ENCODE measurements at regions of chr6 and their contacts with region 1.

Region 1: GRCh38 chr6:108921547-108922361 is 73.5 kb downstream of the ARMC2 start:
- DNase-seq: no peak
- H3K4me3 Mint-ChIP-seq: no peak overlapping the region
- H3K27ac Mint-ChIP-seq: peak overlapping the region; percentile 4
- H3K4me1 Mint-ChIP-seq: peaks cover 37% of the 10 kb centered on the region
- H3K27me3 Mint-ChIP-seq: peaks cover 65% of the 10 kb centered on the region

Region 2: GRCh38 chr6:108874470-108875160 is 47.1 kb before region 1 on chr6:
- intact Hi-C with region 1: loop called (anchors 1 kb)
- DNase-seq: peak; percentile 58
- H3K4me3 Mint-ChIP-seq: peak overlapping the region; percentile 47
- H3K27ac Mint-ChIP-seq: peak overlapping the region; percentile 81
- H3K4me1 Mint-ChIP-seq: peaks cover 53% of the 10 kb centered on the region
- H3K27me3 Mint-ChIP-seq: peaks cover 15% of the 10 kb centered on the region

Region 3: GRCh38 chr6:108942556-108943492 is 21.1 kb after region 1 on chr6:
- intact Hi-C with region 1: loop called (anchors 2 kb)
- DNase-seq: peak; percentile 58
- H3K4me3 Mint-ChIP-seq: peak overlapping the region; percentile 64
- H3K27ac Mint-ChIP-seq: peak overlapping the region; percentile 84
- H3K4me1 Mint-ChIP-seq: peaks cover 59% of the 10 kb centered on the region
- H3K27me3 Mint-ChIP-seq: no peaks in the 10 kb centered on the region

Region 4: DNA sequence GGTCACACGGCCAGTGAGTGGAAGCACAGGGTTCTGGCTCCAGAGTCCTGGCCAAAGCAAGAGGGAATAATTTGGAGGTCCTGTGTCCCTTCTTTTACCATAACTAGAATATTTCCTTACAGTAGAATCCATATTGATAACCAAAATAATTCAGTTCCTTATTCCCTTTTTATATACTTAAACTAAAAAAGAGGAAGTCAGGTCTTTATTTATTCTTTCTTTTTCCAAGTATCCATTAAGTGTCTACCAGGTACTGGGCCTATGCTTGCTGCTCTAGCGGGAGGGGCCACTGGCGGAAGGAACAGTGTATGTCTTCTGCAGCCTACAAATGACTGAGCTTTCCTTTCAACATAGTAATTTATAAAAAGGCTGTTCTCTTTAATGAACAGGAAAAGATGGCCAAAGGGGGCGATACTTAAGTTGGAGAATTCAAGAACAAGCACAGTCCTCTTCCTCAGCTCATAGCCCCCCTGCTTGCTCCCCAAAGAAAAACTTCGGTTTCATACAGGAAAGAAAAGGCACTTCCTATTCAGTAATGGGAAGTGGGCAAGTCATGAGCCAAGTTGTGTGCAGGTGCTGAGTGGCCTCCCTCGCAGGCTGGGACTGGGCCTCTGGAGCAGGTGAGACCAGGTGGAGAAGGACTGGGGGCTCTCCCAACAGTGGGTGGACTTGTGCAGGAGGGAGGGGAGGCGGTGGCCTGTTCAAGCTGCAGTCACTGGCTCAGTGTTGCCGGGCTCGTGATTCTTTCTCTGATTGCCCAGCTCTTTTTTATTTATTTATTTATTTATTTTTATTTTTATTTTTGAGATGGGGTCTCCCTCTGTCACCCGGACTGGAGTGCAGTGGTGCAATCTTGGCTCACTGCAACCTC is 37.4 kb after region 1 on chr6:
- intact Hi-C with region 1: no loop called
- DNase-seq: no peak
- H3K4me3 Mint-ChIP-seq: no peak overlapping the region
- H3K27ac Mint-ChIP-seq: no peak overlapping the region
- H3K4me1 Mint-ChIP-seq: peaks cover 30% of the 10 kb centered on the region
- H3K27me3 Mint-ChIP-seq: peaks cover 2% of the 10 kb centered on the region

Measured in activated T-helper 2 cell treated with anti-CD3 and anti-CD28 coated beads, Interferon-gamma antibody, Interleukin-2, Interleukin-4, amounts not matched to agents 10 μg/mL and 5 μg/mL and 100 μg/mL, durations not matched to agents 14 hours and 24 hours and 36 hours (primary cell).